Dendritic cell treated with granulocyte-macrophage colony-stimulating factor and Interleukin-4, amounts not matched to agents 40 ng/mL and 50 ng/mL, for 4 days (primary cell): ENCODE measurements at regions of chr10 and their contacts with region 1.

Region 1: DNA sequence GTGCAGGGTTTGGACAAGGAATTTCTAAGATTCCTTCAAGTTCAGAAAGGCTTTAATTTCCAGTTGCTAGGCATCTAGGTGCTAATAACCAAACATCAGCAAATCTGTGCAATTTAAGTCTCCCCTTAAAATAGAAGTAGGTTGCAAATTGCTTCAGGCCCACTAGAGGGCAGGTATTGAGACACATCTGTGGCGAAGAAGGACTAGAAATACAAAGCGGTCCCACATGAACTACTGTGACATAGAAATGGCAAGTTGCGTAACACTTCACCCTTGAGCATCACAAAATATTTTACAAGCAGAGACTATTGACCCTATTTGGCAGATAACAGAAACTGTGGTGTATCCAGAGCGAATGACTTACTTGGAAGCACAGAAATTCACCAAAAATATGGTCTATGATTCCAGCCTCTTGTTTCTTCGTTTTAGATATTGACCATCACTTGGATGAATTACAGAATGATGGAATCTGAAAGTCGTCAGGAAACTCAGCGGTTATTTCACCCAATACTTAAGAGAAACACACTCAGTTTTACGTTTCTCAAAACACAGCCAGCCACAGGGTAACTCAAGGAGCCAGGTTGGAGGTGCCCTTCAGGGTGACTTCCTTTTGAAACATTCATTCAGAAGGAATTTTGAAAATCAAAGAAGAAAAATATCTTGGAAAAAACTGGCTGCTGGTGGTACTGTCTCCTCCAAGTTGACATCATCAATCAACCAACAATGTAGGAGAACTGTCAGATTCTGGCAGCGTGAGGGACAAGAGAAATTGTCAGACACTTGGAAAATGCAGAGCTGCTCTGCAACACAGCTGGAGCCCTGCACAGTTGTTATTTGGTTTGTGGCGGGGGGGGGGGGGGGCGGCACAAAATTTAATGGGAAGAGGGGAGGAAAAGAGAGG is 256.3 kb upstream of the MINDY3 start:
- H3K4me3 Mint-ChIP-seq: no peak overlapping the region
- H3K27ac Mint-ChIP-seq: no peak overlapping the region
- H3K4me1 Mint-ChIP-seq: no peaks in the 10 kb centered on the region
- H3K27me3 Mint-ChIP-seq: no peaks in the 10 kb centered on the region

Region 2: GRCh38 chr10:16258291-16259040 is 141.8 kb after region 1 on chr10:
- intact Hi-C with region 1: no loop called
- H3K4me3 Mint-ChIP-seq: no peak overlapping the region
- H3K27ac Mint-ChIP-seq: no peak overlapping the region
- H3K4me1 Mint-ChIP-seq: no peaks in the 10 kb centered on the region
- H3K27me3 Mint-ChIP-seq: no peaks in the 10 kb centered on the region

Region 3: GRCh38 chr10:16777473-16778370 is 661.1 kb after region 1 on chr10:
- intact Hi-C with region 1: loop called (anchors 5 kb)
- H3K4me3 Mint-ChIP-seq: no peak overlapping the region
- H3K27ac Mint-ChIP-seq: no peak overlapping the region
- H3K4me1 Mint-ChIP-seq: peaks cover 5% of the 10 kb centered on the region
- H3K27me3 Mint-ChIP-seq: no peaks in the 10 kb centered on the region